Activated CD4-positive, alpha-beta memory T cell treated with anti-CD3 and anti-CD28 coated beads, Interleukin-2, amount 10 ng/mL, durations not matched to agents 7 days and 5 days (primary cell): ENCODE measurements at regions of chr6 and their contacts with region 1.

Region 1: GRCh38 chr6:11496152-11497060 is 41.1 kb upstream of the TMEM170B start:
- DNase-seq: peak; percentile 75
- H3K4me3 Mint-ChIP-seq: no peak overlapping the region
- H3K27ac Mint-ChIP-seq: no peak overlapping the region
- H3K4me1 Mint-ChIP-seq: peaks cover 12% of the 10 kb centered on the region
- H3K27me3 Mint-ChIP-seq: no peaks in the 10 kb centered on the region

Region 2: DNA sequence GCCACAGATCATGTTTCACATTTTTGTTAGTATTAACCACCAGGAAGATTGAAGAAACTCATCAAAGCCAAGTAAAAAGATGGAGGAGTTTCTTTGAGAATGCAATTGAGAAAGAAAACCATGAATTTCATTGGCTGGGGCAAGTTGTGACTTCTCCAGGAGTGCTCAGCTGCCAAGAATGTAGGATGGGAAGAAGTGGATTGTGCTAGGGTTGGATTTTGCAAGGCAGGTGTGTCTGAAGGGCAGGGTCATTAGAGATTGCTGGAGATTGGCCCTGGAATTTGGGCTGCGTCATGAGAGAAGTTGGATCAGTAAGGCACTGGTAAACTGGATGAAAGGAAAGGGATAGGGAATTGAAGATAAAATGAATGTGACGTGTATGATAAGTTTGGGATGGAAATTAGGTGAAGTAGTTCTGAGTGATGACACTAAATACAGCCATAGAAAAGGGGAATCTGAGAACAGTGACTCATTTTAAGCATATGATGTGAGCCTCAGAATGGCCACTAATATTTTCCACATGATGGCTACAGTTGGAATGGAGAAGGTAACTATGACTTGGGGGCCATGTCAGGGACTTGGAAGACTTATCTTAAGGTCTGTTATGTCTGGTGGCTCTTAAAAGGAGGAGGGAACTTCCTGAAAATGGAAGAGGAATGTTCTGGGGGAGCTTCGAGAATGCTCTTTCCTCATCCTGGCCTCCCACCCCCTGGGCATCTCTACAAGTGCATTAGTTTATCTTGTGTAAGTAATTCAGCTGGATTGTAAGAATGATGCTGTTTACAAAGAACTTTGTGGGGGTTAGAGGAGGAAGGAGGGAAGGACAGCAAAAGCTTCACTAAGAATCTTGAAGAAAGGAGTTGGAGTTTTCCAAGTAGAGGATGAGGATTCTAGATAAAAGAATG is 357.1 kb before region 1 on chr6:
- CTCF ChIA-PET with region 1: interaction called, 85 read pairs
- POLR2A ChIA-PET with region 1: interaction called, 3 read pairs
- DNase-seq: no peak
- H3K4me3 Mint-ChIP-seq: no peak overlapping the region
- H3K27ac Mint-ChIP-seq: no peak overlapping the region
- H3K4me1 Mint-ChIP-seq: peaks cover 4% of the 10 kb centered on the region
- H3K27me3 Mint-ChIP-seq: no peaks in the 10 kb centered on the region

Region 3: DNA sequence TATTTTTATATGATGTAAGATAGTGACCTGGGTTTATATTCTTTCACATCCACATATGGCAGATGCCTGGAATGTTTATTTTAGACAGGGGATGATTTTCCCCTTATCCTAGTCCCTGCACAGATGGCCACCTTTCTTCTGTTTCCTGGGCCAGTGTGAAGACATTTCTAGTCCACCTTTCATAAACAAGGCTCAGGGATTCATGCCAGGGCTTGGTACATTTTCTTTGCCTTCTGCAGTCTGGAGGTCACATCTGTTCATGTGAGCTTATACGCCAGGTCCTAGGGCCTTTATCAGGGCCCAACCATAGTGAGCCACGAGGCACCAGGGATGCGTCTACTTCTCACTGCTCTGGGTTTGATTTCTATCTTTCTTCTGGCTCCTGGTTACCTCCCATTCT is 346.9 kb before region 1 on chr6:
- CTCF ChIA-PET with region 1: interaction called, 85 read pairs
- POLR2A ChIA-PET with region 1: interaction called, 3 read pairs
- DNase-seq: no peak
- H3K4me3 Mint-ChIP-seq: no peak overlapping the region
- H3K27ac Mint-ChIP-seq: no peak overlapping the region
- H3K4me1 Mint-ChIP-seq: peaks cover 8% of the 10 kb centered on the region
- H3K27me3 Mint-ChIP-seq: peaks cover 5% of the 10 kb centered on the region

Region 4: DNA sequence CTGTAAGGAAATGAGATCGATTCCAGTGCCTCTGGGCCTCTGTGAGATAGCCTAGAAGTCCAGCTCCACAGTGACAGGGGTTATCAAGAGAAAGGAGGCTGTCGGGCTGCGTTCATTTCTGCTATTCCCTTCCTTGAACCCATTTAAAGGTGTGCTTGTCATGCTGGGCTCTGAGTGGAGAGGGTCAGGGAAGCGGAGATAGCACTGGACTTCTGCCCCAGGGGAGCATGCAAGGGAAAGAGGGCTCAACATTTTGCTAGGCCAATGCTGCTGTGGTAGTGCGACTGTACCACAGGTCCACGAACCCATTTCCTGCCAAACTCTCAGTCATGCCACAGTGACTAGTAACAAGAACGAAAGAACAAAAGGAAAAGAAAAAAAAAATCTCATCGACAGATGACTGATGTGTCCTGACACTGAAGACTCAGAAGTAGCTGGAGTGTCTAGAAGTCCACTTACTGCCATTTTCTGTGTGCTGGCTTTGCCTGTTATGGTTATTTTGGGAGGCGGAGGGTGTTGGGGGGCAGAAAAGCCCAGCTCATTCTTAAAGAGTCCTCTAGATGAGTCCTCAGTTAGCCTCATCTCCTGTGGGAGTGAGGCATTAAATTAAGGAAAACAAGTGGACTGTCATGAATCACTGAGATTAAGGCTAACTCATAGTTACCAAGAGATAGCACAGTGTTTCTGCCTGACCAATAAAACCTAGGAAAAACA is 272.0 kb before region 1 on chr6:
- CTCF ChIA-PET with region 1: interaction called, 12 read pairs
- POLR2A ChIA-PET with region 1: interaction called, 3 read pairs
- DNase-seq: peak; percentile 77
- H3K4me3 Mint-ChIP-seq: peak overlapping the region; percentile 55
- H3K27ac Mint-ChIP-seq: peak overlapping the region; percentile 92
- H3K4me1 Mint-ChIP-seq: peaks cover 80% of the 10 kb centered on the region
- H3K27me3 Mint-ChIP-seq: no peaks in the 10 kb centered on the region

Region 5: GRCh38 chr6:11485271-11485670 is 11.1 kb before region 1 on chr6:
- CTCF ChIA-PET with region 1: interaction called, 16 read pairs
- POLR2A ChIA-PET with region 1: no interaction called
- DNase-seq: no peak
- H3K4me3 Mint-ChIP-seq: no peak overlapping the region
- H3K27ac Mint-ChIP-seq: no peak overlapping the region
- H3K4me1 Mint-ChIP-seq: no peaks in the 10 kb centered on the region
- H3K27me3 Mint-ChIP-seq: peaks cover 2% of the 10 kb centered on the region

Region 6: DNA sequence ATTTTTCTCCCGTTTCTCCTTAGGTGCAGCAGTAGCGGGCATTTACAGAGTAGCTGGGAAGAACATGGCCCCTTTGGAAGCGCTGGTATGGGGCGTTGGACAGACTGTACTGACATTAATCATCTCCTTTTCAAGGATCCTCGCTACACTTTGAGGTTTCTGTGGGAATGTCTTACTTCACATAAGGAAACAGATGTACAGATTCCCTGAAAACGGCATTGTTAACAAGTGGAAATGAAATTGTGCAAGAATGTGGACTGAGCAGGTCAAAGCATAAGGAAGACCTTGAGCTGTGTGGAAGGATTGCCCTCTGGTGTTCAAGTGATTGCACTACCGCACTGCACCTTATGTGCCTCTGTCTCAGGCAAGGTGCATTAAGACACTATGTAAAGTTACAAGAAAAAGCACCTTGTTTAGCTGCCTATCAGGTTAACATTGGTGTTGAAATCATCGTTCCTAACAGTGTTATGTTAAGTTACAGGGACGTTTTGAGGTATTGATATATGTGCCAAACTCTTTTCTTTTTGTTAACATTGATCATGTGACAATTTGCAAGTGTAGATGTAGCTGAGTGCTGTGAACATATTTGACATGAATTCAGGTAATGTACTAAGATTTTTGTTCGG is 79.1 kb after region 1 on chr6:
- CTCF ChIA-PET with region 1: interaction called, 16 read pairs
- POLR2A ChIA-PET with region 1: no interaction called
- DNase-seq: peak; percentile 57
- H3K4me3 Mint-ChIP-seq: no peak overlapping the region
- H3K27ac Mint-ChIP-seq: no peak overlapping the region
- H3K4me1 Mint-ChIP-seq: no peaks in the 10 kb centered on the region
- H3K27me3 Mint-ChIP-seq: no peaks in the 10 kb centered on the region